Caco-2 (cell line): ENCODE measurements at regions of chr3 and their contacts with region 1.

Region 1: DNA sequence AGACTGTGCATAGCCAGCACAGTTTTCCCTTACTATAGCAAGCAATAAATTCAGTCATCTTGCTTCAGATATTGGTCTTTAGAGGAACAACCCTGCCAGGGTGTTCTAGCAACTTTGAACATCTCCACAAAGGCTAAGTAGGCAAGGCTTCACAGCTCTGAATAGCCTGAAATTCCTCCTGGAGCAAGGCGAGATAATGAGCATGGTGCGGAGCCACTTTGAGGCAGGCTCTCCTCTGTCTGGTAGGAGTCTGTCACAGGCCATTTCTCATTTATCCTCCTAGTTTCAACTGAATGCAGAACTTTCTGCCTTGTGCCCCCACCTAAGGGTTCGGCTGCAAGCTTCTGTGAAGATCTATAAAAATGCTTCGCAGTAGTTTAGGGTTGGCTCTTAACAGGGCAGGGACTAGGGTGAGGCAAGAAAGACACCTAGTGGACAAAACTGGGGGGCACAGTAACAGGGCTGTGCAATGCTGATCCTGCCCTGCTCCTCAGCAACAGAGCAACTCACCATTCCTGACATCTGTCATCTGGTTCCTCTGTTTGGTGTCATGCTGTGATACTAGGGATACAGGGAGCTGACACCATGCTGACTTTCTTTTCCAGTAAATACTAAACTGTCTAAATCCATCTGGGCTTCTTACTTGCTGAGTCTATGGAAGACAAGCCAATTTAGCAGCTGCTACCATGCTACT is 16.6 kb upstream of the EHHADH start:
- DNase-seq: peak; percentile 64 to 70
- H3K4me3 ChIP-seq: no peak overlapping the region
- H3K4me3 Mint-ChIP-seq: no peak overlapping the region
- H3K27ac Mint-ChIP-seq: no peak overlapping the region
- H3K4me1 ChIP-seq: peaks cover 14% of the 10 kb centered on the region
- H3K4me1 Mint-ChIP-seq: peaks cover 20% of the 10 kb centered on the region
- H3K27me3 ChIP-seq: no peaks in the 10 kb centered on the region
- H3K27me3 Mint-ChIP-seq: no peaks in the 10 kb centered on the region
- CTCF ChIP-seq: peak; percentile 69 to 83

Region 2: DNA sequence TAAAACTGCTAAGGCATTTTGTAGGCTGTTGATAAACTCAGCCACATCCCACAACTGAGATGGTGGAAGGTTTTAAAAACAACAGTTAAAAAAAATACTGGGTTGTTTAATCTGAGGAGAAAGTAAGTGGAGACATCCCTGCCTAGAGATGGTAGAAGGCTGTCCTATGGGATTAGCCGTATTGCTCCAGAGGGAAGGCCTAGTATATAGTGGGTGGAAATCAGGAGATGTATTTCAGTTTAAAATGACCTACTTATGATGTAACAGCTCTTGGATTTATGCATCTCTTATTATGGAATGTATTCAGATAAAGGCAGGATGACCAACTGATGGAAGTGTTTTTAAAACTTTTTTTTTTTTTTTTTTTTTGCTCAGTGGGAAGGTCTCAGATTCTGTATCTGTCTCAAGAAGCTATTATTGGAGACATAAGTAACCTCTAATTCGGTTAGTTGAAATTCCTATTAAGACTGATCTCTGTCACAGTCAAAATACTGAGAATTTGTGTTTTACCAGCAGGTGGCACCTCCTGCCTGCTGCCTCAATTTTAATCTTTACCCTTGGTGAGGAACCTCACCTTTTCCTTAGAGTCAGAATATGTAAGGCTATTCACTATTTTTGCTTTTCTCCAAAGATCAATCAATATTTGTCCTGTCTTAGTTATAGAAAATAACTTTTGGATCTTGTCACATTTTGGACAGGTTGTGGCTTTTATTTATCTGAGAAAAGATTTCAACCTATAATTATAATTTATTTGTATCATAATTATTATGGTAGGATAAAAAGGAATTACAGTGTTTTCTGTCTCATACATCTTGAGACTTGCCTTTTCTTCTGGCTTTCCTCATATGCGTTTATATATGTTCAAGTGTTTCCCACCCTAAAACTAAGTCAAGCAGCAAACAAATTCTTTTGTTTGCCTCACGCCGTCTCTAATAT is 395.4 kb before region 1 on chr3:
- CTCF ChIA-PET with region 1: no interaction called
- POLR2A ChIA-PET with region 1: no interaction called
- intact Hi-C with region 1: loop called (anchors 2 kb)
- DNase-seq: peak; percentile 33 to 51
- H3K4me3 ChIP-seq: no peak overlapping the region
- H3K4me3 Mint-ChIP-seq: no peak overlapping the region
- H3K27ac Mint-ChIP-seq: no peak overlapping the region
- H3K4me1 ChIP-seq: no peaks in the 10 kb centered on the region
- H3K4me1 Mint-ChIP-seq: no peaks in the 10 kb centered on the region
- H3K27me3 ChIP-seq: no peaks in the 10 kb centered on the region
- H3K27me3 Mint-ChIP-seq: no peaks in the 10 kb centered on the region
- CTCF ChIP-seq: peak; percentile 37 to 73

Region 3: GRCh38 chr3:185215873-185216606 is 54.4 kb before region 1 on chr3:
- CTCF ChIA-PET with region 1: no interaction called
- POLR2A ChIA-PET with region 1: no interaction called
- intact Hi-C with region 1: loop called (anchors 5 kb)
- DNase-seq: no peak
- H3K4me3 ChIP-seq: no peak overlapping the region
- H3K4me3 Mint-ChIP-seq: no peak overlapping the region
- H3K27ac Mint-ChIP-seq: no peak overlapping the region
- H3K4me1 ChIP-seq: no peaks in the 10 kb centered on the region
- H3K4me1 Mint-ChIP-seq: no peaks in the 10 kb centered on the region
- H3K27me3 ChIP-seq: no peaks in the 10 kb centered on the region
- H3K27me3 Mint-ChIP-seq: no peaks in the 10 kb centered on the region
- CTCF ChIP-seq: peak; percentile 38 to 60

Region 4: DNA sequence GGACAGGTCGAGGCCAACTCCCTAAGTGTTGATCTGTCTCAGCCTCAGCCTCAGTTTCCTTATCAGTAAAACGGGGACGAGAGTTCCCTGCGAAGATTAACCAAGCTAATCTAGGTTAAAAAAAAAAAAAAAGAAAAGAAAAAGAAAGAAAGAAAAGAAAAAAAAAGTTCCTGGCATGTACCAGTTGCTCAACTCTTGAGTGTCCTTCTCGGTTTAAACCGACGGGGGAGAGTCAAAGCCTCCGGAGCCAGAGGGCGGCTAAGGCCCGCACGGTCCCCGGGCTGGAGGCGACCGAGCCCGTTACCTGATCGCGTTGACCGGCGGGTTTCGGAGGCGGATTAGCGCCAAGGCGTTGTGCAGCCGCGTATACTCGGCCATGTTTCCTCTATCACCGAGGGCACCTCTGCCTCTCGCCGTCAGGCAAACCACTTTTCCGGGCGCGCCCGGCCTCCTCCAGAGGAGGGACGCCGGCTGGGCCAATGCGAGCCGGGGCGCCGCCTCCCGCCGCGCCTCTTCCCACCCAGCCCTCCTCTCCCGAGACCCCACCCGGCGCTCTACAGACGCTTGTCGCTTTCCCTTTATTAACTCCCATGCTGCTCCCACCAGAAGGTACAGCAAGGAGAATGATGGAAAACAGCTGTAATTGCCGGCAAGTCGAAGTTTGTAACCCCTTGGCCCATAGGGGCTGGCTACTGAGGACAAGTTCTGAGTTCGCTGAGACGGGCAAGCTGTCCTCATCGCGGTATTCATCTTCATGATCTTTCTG is 16.6 kb before region 1 on chr3 and contains the start of gene EHHADH:
- CTCF ChIA-PET with region 1: no interaction called
- POLR2A ChIA-PET with region 1: no interaction called
- intact Hi-C with region 1: loop called (anchors 1 kb)
- DNase-seq: peak; percentile 74 to 79
- H3K4me3 ChIP-seq: peak within 1 kb of the TSS; percentile 46
- H3K4me3 Mint-ChIP-seq: peak within 1 kb of the TSS; percentile 83
- H3K27ac Mint-ChIP-seq: peak within 1 kb of the TSS; percentile 92
- H3K4me1 ChIP-seq: peaks cover 25% of the 10 kb centered on the region
- H3K4me1 Mint-ChIP-seq: peaks cover 26% of the 10 kb centered on the region
- H3K27me3 ChIP-seq: no peaks in the 10 kb centered on the region
- H3K27me3 Mint-ChIP-seq: no peaks in the 10 kb centered on the region
- CTCF ChIP-seq: no peak
- total RNA-seq, gene EHHADH: 24.9 and 25.0 TPM in 2 replicates

Region 5: DNA sequence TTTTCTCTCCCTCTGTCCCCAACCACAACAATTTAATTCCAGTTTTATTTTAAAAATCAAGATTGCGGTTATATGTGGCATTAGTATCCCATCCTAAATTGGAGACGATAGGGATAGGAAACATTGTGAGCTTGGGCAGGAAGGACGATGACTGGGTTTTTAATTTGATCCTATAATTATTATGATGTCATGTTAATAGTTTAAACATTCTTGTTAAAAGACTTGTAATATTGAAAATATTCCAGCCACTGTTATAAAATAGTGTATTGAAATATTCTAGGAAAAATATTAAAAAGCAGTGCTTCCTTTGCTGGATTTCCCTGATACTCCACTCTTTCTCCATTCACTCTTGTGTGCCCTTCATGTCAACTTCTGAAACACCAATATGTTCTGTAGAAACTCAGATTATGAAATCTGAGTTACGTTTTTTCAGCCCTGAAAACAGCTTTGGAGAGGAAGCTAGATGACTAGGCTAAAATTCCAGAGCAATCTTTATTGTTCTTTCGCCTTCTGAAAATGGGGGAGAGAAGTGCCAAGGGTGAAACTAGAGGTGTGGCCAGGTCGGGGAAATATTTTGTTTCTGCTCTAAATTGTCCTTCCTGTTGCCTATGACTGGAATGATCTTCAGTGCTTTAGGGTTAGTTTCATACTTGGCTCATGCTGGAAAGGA is 46.5 kb after region 1 on chr3:
- CTCF ChIA-PET with region 1: no interaction called
- POLR2A ChIA-PET with region 1: no interaction called
- intact Hi-C with region 1: no loop called
- DNase-seq: peak in 1 of 2 experiments; percentile 32
- H3K4me3 ChIP-seq: no peak overlapping the region
- H3K4me3 Mint-ChIP-seq: peak overlapping the region; percentile 64
- H3K27ac Mint-ChIP-seq: peak overlapping the region; percentile 90
- H3K4me1 ChIP-seq: peaks cover 28% of the 10 kb centered on the region
- H3K4me1 Mint-ChIP-seq: peaks cover 15% of the 10 kb centered on the region
- H3K27me3 ChIP-seq: no peaks in the 10 kb centered on the region
- H3K27me3 Mint-ChIP-seq: no peaks in the 10 kb centered on the region
- CTCF ChIP-seq: no peak